Activated CD4-positive, alpha-beta T cell treated with anti-CD3 and anti-CD28 coated beads for 36 hours (primary cell): ENCODE measurements at regions of chr5 and their contacts with region 1.

Region 1: DNA sequence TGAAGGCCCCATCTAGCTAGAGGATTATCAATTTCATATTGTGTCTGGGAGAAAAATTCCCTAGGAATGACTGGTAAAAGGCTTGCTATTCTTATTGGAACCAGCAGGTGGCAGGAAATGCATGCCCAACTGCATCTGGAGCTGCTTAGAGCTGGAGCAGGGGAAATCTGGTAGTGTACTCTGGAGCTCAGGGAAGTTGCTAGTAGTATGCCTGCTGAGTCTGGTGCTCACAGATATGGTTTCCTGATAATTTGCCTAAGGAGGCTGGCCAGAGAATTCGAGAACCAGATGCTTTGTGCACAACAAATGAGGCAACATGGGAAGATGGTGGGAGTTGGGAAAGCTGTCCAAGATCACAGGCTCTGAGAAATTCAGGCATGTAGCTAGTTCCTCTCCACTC is 53.7 kb downstream of the G3BP1 start:
- DNase-seq: peak; percentile 47
- ATAC-seq: no peak
- H3K4me3 Mint-ChIP-seq: no peak overlapping the region
- H3K27ac Mint-ChIP-seq: no peak overlapping the region
- H3K4me1 Mint-ChIP-seq: peaks cover 6% of the 10 kb centered on the region
- H3K27me3 Mint-ChIP-seq: no peaks in the 10 kb centered on the region

Region 2: DNA sequence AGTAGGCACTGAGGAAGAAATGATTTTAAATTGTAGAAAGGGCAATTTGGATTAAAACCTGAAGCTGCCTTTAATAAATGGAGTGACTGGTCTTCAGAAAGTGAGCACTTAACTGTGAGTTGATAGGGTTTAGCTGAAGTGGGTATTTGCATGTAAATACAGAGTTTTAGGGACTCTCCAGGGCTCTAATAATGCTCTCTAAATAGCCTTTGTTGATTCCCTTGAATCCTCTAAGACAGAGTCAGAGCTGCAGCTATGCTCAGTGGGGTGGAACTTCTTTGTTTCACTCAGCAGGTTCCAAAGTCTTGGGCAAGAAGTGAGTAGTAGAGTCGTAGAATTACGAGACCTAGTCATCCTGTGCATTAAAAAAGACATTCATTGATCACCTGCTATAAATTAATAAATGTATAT is 77.8 kb after region 1 on chr5:
- CTCF ChIA-PET with region 1: no interaction called
- POLR2A ChIA-PET with region 1: no interaction called
- intact Hi-C with region 1: no loop called
- DNase-seq: no peak
- ATAC-seq: no peak
- H3K4me3 Mint-ChIP-seq: no peak overlapping the region
- H3K27ac Mint-ChIP-seq: no peak overlapping the region
- H3K4me1 Mint-ChIP-seq: no peaks in the 10 kb centered on the region
- H3K27me3 Mint-ChIP-seq: peaks cover 2% of the 10 kb centered on the region

Region 3: GRCh38 chr5:152142840-152143469 is 317.5 kb after region 1 on chr5:
- CTCF ChIA-PET with region 1: interaction called, 97 read pairs
- POLR2A ChIA-PET with region 1: no interaction called
- intact Hi-C with region 1: loop called (anchors 1 kb)
- DNase-seq: peak; percentile 78
- ATAC-seq: peak; percentile 81
- H3K4me3 Mint-ChIP-seq: no peak overlapping the region
- H3K27ac Mint-ChIP-seq: no peak overlapping the region
- H3K4me1 Mint-ChIP-seq: no peaks in the 10 kb centered on the region
- H3K27me3 Mint-ChIP-seq: no peaks in the 10 kb centered on the region

Region 4: GRCh38 chr5:152271420-152271819 is 446.0 kb after region 1 on chr5:
- CTCF ChIA-PET with region 1: no interaction called
- POLR2A ChIA-PET with region 1: no interaction called
- intact Hi-C with region 1: loop called in 1 of 2 experiments (anchors 5 kb)
- DNase-seq: peak; percentile 8
- ATAC-seq: no peak
- H3K4me3 Mint-ChIP-seq: no peak overlapping the region
- H3K27ac Mint-ChIP-seq: no peak overlapping the region
- H3K4me1 Mint-ChIP-seq: no peaks in the 10 kb centered on the region
- H3K27me3 Mint-ChIP-seq: no peaks in the 10 kb centered on the region

Region 5: DNA sequence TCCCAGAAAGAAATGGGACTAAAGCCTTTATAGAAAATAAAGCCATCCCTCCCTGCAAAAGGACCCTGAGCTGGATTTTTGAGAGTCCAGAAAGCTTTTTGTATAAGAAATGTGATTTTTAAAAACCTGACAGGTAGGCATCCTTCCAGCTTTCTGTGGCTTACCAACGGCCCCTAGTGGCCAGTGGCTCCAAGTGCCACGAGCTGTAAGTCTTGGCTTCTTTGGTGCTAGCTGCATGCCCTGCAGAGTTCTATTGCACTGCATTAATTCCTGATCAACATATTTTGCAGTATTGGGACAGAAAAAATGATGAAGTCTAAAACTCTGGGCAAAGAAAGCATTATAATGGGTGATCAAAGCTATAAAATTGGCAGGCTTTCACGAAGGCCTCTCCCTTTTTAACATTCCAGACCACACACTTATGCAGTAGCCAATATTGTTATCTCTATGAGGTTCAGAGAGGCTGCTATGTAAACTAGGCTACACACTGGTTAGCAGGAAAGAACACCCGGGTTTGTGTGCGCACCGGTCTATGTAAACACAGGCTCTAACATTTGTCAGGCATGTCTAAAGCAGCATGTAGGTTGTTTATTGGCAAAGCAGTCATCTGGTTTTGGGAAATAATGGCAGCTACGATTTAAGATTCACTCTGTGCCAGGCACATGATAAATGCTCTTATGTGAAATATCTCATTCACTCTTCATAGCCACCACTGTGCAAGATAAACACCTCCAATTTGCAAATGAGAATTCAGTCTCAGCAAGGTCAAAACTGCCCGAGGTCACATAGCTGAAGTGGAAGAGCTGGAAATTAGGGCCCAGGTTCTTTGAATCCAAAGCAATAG is 524.5 kb after region 1 on chr5:
- CTCF ChIA-PET with region 1: interaction called, 34 read pairs
- POLR2A ChIA-PET with region 1: no interaction called
- intact Hi-C with region 1: loop called (anchors 1 to 5 kb)
- DNase-seq: peak; percentile 61
- ATAC-seq: no peak
- H3K4me3 Mint-ChIP-seq: no peak overlapping the region
- H3K27ac Mint-ChIP-seq: no peak overlapping the region
- H3K4me1 Mint-ChIP-seq: no peaks in the 10 kb centered on the region
- H3K27me3 Mint-ChIP-seq: peaks cover 2% of the 10 kb centered on the region

Region 6: DNA sequence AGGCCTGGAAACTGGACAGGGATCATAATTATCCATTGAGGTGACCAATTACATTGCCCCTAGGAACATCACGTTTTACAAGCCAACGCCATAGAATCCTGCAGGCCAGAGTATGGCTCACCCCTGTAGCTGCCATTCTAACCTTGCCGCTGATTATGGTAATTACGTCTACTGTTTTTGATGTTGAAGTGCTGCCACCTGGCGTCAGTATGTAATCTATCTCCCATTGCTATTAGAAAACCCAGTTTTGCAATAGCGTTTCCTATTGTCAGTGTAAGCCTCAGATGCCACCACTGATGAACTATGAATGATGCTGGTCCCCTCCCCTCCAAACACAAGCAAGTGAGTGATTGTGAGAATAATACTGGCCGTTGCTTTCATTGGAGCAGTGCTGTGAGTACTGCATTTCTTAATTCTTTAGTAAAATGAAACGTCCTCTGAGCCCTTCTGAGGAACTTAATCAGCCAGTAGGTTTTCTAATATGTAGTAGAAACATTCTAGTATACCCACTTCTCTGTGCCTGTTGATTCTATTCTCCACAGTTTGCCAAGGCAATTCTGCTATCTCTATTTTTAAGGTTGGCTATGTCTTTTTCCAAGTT is 680.1 kb after region 1 on chr5:
- CTCF ChIA-PET with region 1: interaction called, 3 read pairs
- POLR2A ChIA-PET with region 1: no interaction called
- intact Hi-C with region 1: loop called (anchors 1 to 2 kb)
- DNase-seq: peak; percentile 69
- ATAC-seq: peak; percentile 84
- H3K4me3 Mint-ChIP-seq: no peak overlapping the region
- H3K27ac Mint-ChIP-seq: no peak overlapping the region
- H3K4me1 Mint-ChIP-seq: no peaks in the 10 kb centered on the region
- H3K27me3 Mint-ChIP-seq: peaks cover 20% of the 10 kb centered on the region

Region 7: GRCh38 chr5:153135411-153135810 is 1310.0 kb after region 1 on chr5:
- CTCF ChIA-PET with region 1: no interaction called
- POLR2A ChIA-PET with region 1: no interaction called
- intact Hi-C with region 1: no loop called
- DNase-seq: no peak
- ATAC-seq: no peak
- H3K4me3 Mint-ChIP-seq: no peak overlapping the region
- H3K27ac Mint-ChIP-seq: no peak overlapping the region
- H3K4me1 Mint-ChIP-seq: no peaks in the 10 kb centered on the region
- H3K27me3 Mint-ChIP-seq: no peaks in the 10 kb centered on the region